Endothelial cell of umbilical vein (primary cell): ENCODE measurements at regions of chr10 and their contacts with region 1.

Region 1: GRCh38 chr10:119680050-119680449 is 28.9 kb downstream of the BAG3 start:
- DNase-seq: peak; percentile 86
- H3K4me3 ChIP-seq: no peak overlapping the region
- H3K27ac ChIP-seq: peak overlapping the region; percentile 92
- H3K4me1 ChIP-seq: peaks cover 25% of the 10 kb centered on the region
- H3K27me3 ChIP-seq: no peaks in the 10 kb centered on the region
- CTCF ChIP-seq: no peak
- POLR2A ChIP-seq: peak; percentile 67

Region 2: GRCh38 chr10:119658253-119658673 is 21.8 kb before region 1 on chr10:
- CTCF ChIA-PET with region 1: interaction called, 6 read pairs
- POLR2A ChIA-PET with region 1: no interaction called
- dilution Hi-C with region 1: no loop called
- intact Hi-C with region 1: loop called (anchors 1 kb)
- DNase-seq: peak; percentile 90
- H3K4me3 ChIP-seq: no peak overlapping the region
- H3K27ac ChIP-seq: peak overlapping the region; percentile 78
- H3K4me1 ChIP-seq: peaks cover 49% of the 10 kb centered on the region
- H3K27me3 ChIP-seq: no peaks in the 10 kb centered on the region
- CTCF ChIP-seq: no peak
- POLR2A ChIP-seq: no peak

Region 3: GRCh38 chr10:119667562-119668328 is 12.3 kb before region 1 on chr10:
- CTCF ChIA-PET with region 1: interaction called, 10 read pairs
- POLR2A ChIA-PET with region 1: interaction called, 4 read pairs
- dilution Hi-C with region 1: no loop called
- intact Hi-C with region 1: no loop called
- DNase-seq: no peak
- H3K4me3 ChIP-seq: no peak overlapping the region
- H3K27ac ChIP-seq: peak overlapping the region; percentile 34
- H3K4me1 ChIP-seq: peaks cover 14% of the 10 kb centered on the region
- H3K27me3 ChIP-seq: no peaks in the 10 kb centered on the region
- CTCF ChIP-seq: no peak
- POLR2A ChIP-seq: no peak

Region 4: GRCh38 chr10:119989966-119990365 is 309.9 kb after region 1 on chr10:
- CTCF ChIA-PET with region 1: no interaction called
- POLR2A ChIA-PET with region 1: no interaction called
- dilution Hi-C with region 1: no loop called
- intact Hi-C with region 1: no loop called
- DNase-seq: no peak
- H3K4me3 ChIP-seq: no peak overlapping the region
- H3K27ac ChIP-seq: no peak overlapping the region
- H3K4me1 ChIP-seq: no peaks in the 10 kb centered on the region
- H3K27me3 ChIP-seq: no peaks in the 10 kb centered on the region
- CTCF ChIP-seq: no peak
- POLR2A ChIP-seq: no peak

Region 5: GRCh38 chr10:120931423-120931822 is 1251.4 kb after region 1 on chr10:
- CTCF ChIA-PET with region 1: no interaction called
- POLR2A ChIA-PET with region 1: no interaction called
- dilution Hi-C with region 1: no loop called
- intact Hi-C with region 1: no loop called
- DNase-seq: no peak
- H3K4me3 ChIP-seq: no peak overlapping the region
- H3K27ac ChIP-seq: no peak overlapping the region
- H3K4me1 ChIP-seq: no peaks in the 10 kb centered on the region
- H3K27me3 ChIP-seq: peaks cover 0 to 2% of the 10 kb centered on the region in 2 experiments
- CTCF ChIP-seq: no peak
- POLR2A ChIP-seq: no peak